Head of caudate nucleus (tissue), 42 donors: ENCODE measurements at regions of chr2 and their contacts with region 1.

Region 1: GRCh38 chr2:61538200-61538919 is at the start of gene XPO1:
- DNase-seq: peak; percentile 99 to 100 (median 100)

Region 2: DNA sequence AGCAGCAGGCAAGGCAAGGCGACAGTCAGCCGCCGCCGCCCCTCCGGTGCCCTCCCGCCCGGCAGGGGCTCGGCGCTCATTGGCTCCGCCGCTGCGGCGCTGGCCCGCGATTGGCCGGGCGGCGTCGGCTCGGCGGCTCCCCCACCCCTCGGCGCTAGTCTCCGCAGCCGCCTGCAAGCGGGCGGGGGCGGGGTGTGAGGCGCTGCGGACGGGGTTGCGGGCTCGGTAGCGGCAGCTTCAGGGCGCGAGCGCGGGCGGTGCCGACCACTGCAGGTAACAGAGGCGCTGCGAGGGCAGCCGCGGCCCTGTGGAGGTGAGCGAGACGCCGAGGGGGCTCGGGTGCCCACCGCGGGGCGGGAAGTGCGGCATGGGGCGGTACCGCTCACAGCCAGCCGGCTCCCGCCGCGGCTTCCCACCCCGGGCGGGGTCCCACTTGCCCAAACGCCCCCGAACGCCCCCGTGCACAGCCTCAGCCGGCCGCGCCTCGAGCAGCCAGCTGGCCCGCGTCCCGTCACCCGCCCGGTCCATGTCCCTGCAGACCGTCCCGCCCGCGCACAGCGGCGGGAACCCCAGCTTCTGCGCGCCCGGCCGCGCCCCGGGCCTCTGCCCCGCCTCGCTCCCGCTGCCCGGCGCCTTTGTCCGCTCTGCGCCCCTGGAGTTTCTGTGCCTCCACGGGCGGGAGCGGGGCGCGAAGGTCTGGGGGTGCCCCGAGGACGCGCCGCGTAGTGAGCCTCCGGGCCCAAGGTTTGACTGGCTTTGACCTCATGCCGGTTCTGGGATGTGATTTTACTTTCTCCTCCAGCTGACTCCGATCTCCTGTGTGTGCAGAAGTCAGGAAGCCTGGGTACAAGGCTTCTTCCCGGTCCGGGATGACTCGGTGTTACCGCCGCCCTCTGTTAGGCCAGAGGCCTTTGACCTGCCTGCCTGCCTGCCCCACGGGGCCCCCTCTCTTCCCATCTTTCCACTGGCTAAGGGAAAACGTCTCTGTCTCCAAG is 472.3 kb before region 1 on chr2 and contains the start of gene SANBR:
- intact Hi-C with region 1: loop called (anchors 5 kb)
- DNase-seq: peak; percentile 74 to 96 (median 90)

Region 3: DNA sequence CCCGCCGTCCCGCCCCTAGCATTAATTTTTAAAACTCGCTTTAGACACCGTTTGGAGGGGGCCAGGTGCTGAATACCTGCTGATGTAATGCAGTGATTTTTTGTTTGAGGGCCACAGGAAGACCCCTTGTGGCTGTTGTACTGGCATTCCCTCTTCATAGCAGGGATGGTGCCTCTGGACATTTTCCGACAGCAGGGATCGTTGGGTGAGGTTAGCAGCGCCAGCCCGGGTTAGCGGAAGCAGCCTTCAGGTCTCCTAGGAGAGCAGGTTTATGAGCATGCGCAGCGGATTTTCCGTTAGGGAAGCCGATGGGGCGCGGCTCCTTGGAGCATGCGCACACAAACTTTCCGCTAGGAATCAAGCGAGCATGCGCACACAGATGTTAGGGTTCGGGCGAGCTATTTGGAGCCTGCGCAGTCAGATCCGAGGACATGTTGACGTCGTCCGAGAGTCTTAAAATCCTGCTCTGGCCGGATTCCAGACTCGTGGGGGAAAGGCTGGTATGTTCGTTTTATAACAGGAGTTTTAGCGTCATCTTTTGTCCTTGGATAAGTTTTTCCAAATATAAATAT is 393.6 kb before region 1 on chr2:
- intact Hi-C with region 1: loop called (anchors 10 kb)
- DNase-seq: peak; percentile 81 to 96 (median 90)

Region 4: GRCh38 chr2:61380056-61380881 is 158.1 kb before region 1 on chr2:
- intact Hi-C with region 1: no loop called
- DNase-seq: no peak

Region 5: GRCh38 chr2:61470965-61471904 is 67.1 kb before region 1 on chr2 and contains the start of gene USP34:
- intact Hi-C with region 1: loop called (anchors 2 kb)
- DNase-seq: peak; percentile 68 to 96 (median 92)

Region 6: GRCh38 chr2:61694312-61695274 is 156.2 kb after region 1 on chr2:
- intact Hi-C with region 1: loop called (anchors 10 kb)
- DNase-seq: peak; percentile 85 to 98 (median 95)

Region 7: GRCh38 chr2:61764035-61764800 is 225.9 kb after region 1 on chr2:
- intact Hi-C with region 1: loop called (anchors 2 kb)
- DNase-seq: peak; percentile 94 to 99 (median 98)

Region 8: DNA sequence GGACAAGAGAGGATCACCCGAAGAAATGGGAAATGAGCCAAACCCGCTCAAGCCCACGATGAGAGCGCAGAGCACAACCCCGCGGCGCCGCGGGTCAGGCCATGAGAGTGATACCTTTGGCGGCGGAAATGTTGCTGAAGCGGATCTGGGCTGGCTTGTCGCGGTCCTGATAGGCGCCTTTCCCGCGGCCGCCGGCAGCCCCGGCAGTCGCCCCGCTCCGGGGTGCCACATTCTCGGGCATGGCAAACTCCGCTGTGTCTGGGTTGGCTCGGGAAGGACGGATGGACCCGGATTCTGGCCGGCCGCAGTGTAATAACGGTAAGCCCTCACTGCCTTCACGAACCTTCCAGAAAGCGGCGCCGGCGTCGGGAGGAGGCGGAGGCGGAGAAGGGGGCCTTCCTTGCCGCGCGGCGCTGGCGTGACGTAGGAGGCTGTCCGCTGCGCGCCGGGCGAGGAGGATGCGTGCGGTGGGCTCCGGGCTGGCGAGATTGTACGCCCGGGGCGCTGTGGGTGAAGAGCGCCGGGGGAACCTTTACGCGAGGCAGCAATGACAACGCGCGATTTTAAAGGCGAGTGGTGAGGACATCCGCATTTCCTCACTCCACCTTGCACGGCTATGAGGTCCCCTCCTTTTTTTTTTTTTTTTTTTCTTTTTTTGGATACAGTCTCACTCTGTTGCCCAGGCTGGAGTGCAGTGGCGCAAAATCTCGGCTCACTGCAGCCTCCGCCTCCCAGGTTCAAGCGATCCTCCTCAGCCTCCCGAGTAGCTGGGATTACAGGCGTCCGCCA is 350.1 kb after region 1 on chr2 and contains the start of gene CCT4:
- intact Hi-C with region 1: loop called (anchors 10 kb)
- DNase-seq: peak; percentile 73 to 97 (median 91)

Region 9: DNA sequence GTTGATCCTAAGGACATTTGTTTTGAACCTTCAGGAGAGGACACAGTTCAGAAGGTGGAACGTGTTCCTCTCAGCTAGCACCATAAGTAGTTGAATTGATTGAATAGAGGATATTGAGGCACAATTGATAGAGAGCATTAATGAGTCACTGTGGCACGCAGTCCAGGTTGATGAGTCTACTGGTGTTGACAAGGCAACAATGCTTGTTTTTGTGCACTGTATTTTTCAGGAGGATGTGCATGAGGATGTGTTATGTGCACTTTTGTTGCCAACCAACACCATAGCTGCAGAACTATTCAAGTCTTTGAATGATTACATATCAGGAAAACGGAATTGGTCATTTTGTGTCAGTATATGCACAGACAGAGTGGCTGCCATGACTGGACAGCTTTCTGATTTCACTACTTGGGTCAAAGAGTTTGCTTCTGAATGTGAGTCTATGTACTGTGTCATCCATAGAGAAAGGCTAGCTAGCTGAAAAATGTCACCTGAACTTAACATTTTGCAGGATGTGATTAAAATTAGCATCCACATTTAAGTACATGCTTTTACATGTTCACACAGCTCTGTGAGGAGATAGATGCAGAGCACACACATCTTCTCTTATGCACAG is 517.5 kb after region 1 on chr2:
- intact Hi-C with region 1: no loop called
- DNase-seq: no peak